ENCODE measurements at regions of chr1 and their contacts with region 1.

Region 1: DNA sequence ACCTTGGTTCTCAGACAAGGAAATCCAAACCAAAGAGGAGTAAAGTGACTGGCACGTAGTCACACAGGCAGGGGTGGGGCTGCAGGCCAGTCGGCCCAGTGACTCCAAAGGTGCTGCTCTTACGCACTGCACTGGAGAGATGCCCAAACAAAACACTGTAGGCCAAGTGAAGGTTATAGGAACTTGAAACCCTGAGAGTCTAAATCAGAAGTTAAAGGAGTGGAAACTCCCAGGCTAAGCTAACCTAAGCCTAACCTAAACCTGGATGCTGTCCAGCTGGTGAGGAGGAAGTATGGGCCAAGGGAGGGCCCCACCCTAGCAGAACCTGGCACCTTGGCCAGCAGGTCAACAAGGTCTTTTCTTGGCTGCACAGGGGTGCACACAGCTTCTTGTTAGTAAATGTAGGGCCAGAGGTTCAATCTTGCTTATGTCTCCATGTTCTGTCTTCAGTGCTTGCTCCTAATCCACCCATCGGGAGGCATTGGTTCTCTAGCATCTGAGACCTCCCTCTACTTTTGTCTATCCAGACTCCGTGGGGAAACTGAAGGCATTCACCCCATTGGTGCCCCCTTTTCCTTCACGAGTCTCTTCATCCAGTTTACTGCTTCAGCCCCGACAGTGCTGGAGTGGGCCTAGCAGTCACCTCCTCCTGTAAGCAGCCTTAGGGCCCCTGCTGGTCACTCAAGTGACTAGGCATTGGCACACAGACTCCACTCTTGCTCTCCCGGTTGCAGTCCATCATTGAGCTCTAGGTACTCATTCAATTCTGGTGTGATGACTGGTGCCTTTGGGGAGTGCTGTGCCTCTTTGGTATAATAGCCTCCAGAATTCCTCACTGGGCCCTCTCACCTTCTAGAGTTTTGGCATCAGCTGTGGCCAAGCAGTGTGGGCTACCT is 12.9 kb upstream of the TMEM125 start:
- DNase-seq: no peak
- ATAC-seq: peak; percentile 53

Region 2: GRCh38 chr1:43274125-43274803 is 17.3 kb after region 1 on chr1:
- intact Hi-C with region 1: no loop called
- DNase-seq: no peak
- ATAC-seq: no peak

Region 3: GRCh38 chr1:43309405-43310025 is 52.6 kb after region 1 on chr1:
- intact Hi-C with region 1: loop called (anchors 5 kb)
- DNase-seq: no peak
- ATAC-seq: no peak

Region 4: DNA sequence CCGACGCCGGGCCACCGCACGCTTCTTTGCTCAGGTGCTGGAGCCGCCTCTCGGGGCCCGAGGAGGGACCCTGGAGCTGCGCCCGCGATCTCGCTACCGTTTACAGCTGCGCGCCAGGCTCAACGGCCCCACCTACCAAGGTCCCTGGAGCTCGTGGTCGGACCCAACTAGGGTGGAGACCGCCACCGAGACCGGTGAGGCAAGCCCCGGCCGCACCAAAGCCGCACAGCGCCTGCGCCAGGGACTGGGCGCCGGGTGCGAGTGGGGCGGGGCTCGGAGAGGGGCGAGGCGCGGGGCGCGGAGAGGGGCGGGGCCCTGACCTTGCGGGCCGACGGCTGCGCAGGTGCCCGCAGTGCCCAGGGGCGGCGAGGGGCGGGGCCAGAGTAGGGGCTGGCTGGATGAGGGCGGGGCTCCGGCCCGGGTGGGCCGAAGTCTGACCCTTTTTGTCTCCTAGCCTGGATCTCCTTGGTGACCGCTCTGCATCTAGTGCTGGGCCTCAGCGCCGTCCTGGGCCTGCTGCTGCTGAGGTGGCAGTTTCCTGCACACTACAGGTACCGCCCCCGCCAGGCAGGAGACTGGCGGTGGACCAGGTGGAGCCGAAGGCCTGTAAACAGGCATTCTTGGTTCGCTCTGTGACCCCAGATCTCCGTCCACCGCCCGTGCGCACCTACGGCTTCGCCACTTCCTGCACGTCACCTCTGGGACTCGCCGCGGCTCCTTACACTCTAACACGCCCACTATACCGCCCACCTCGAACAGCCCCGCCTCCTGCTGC is 92.1 kb after region 1 on chr1:
- intact Hi-C with region 1: loop called (anchors 5 kb)
- DNase-seq: peak; percentile 91
- ATAC-seq: peak; percentile 92

Region 5: GRCh38 chr1:43554444-43554992 is 297.6 kb after region 1 on chr1:
- intact Hi-C with region 1: no loop called
- DNase-seq: no peak
- ATAC-seq: no peak